ENCODE measurements at regions of chr2 and their contacts with region 1.

Region 1: DNA sequence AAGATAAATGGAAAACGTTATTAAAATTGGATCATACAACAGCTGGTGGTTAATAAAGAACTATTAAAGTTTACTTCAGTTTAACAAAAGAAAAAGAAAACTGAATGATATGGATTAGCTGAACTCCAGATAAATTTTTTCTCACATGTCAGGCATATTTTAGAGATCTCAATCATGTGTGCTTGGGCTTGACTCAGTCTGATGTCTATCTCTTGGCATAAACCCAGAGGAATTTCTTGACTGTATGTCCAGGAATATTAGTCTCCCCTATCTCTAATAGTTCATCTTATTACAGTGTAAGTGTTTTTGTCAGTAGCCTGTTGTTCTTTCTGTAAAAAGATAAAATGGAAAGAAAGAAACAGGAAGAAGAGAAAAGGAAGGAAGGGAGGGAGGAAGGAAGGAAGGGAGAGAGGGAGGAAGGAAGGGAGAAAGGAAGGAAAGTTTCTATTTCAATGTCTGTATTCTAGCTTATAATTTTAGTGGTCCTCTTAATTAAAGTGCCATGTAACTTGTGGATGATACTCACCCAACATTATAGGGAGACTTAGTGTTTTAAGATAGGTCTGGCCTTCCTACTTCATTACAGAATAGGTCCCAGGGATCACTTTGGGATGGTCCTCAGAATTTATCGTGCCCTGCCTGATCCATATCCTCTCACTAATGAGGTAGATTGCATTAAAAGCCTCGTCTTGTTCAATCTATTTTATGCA is 99.7 kb upstream of the UGP2 start:
- DNase-seq: no peak
- ATAC-seq: no peak
- H3K4me3 ChIP-seq: no peak overlapping the region
- H3K27ac ChIP-seq: peak overlapping the region; percentile 87
- H3K4me1 ChIP-seq: peaks cover 32% of the 10 kb centered on the region
- H3K27me3 ChIP-seq: no peaks in the 10 kb centered on the region
- CTCF ChIP-seq: no peak

Region 2: DNA sequence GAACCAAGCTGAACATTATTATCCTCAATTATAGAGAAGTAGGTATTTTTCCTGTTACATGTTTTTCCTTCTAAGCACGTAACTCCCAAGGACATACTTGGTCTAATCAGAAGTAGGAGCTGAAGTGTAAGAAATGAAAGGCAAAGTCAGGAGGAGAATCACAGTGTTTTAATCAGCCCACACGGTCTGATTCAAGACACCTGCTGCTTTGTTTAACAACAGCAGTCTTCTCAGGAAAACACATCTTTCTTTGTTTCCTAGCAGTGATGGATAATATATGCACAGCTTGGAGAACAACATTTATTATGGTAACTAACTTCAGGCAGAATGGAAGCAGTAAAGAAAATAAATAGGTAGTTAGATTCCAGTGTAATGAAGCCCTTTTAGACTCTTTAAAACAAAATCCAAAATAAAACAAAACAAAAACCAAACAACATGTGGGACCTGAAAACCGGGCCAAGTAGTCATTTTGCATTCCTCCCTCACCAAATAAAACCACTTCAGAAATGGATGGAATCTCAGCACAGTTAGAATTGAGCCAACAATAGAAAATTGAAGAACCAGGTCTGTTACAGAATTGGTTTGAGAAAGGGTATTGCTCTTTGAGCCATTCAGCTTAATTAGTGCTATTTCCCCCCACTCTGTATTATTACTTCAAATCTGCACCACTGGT is 38.6 kb after region 1 on chr2:
- intact Hi-C with region 1: loop called in 1 of 2 experiments (anchors 5 kb)
- DNase-seq: no peak
- ATAC-seq: peak in 1 of 4 donors; percentile 19
- H3K4me3 ChIP-seq: no peak overlapping the region
- H3K27ac ChIP-seq: no peak overlapping the region
- H3K4me1 ChIP-seq: peaks cover 4% of the 10 kb centered on the region
- H3K27me3 ChIP-seq: no peaks in the 10 kb centered on the region
- CTCF ChIP-seq: no peak

Measured in psoas muscle (tissue), 8 donors.